CD4-positive, alpha-beta memory T cell (primary cell): ENCODE measurements at regions of chr6 and their contacts with region 1.

Region 1: DNA sequence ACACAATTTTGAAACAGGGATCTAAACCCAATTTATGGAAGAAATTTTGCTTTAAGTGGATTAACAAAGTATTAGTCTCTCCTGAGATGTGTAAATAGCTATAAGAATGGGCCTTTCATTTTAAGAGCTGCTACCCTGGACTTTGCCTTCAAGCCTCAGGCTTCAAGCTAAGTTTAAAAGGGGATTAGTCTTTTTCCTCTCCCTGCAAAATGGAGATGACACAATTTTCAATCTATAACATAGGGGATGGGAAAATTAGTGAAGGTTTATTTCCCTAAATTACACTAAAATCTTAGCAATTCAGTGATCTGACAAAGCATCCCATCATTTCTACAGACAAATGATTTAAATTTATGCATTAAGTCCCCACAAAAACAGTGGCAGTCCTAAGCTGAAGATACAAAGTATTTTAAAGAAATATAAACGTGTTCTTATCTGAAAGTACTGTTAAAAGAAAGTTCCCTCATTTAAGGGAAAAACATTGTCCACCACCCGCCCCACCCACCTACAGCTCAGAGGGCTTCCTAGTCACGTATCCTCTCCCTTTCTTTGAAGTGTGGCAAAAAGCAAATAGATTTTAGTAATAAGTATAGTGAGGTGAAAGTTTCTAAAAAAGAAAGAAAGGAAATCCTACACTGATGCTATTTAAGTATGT is 14.5 kb downstream of the ARHGAP18 start:
- DNase-seq: no peak
- H3K4me3 ChIP-seq: no peak overlapping the region
- H3K4me3 Mint-ChIP-seq: peak overlapping the region in 7 of 8 donors; percentile 2 to 75 (median 37)
- H3K27ac ChIP-seq: no peak overlapping the region
- H3K27ac Mint-ChIP-seq: peak overlapping the region in 6 of 7 donors; percentile 28 to 73 (median 48)
- H3K4me1 ChIP-seq: peaks cover 26% of the 10 kb centered on the region
- H3K4me1 Mint-ChIP-seq: peaks cover 22 to 33% (median 27%) of the 10 kb centered on the region in 4 donors
- H3K27me3 ChIP-seq: no peaks in the 10 kb centered on the region
- H3K27me3 Mint-ChIP-seq: no peaks in the 10 kb centered on the region

Region 2: DNA sequence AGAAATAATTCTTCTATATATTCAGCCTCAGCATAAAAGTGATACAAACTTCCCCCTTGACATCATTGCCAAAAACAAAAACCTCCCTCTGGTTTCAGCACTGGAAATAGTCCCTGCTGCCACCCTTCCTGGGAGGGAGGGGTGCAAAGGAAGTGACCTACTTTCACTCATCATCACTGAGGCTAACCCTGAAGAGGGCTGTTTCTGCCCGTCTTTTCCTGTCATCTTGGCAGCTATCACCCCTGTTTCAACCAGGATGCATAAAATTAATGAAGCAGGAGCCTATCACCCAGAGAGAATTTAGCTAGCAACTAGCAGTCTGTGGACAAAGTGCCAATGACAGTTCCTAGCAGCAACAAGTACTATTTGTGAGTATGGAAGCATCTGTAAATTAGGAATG is 414.8 kb before region 1 on chr6:
- CTCF ChIA-PET with region 1: no interaction called
- POLR2A ChIA-PET with region 1: no interaction called
- intact Hi-C with region 1: no loop called
- DNase-seq: peak; percentile 66 to 80 (median 76)
- H3K4me3 ChIP-seq: no peak overlapping the region
- H3K4me3 Mint-ChIP-seq: peak overlapping the region; percentile 67 to 84 (median 78)
- H3K27ac ChIP-seq: peak overlapping the region; percentile 61
- H3K27ac Mint-ChIP-seq: peak overlapping the region; percentile 57 to 95 (median 85)
- H3K4me1 ChIP-seq: peaks cover 47% of the 10 kb centered on the region
- H3K4me1 Mint-ChIP-seq: peaks cover 31 to 66% (median 48%) of the 10 kb centered on the region in 4 donors
- H3K27me3 ChIP-seq: no peaks in the 10 kb centered on the region
- H3K27me3 Mint-ChIP-seq: peaks cover 0 to 2% of the 10 kb centered on the region in 2 donors

Region 3: DNA sequence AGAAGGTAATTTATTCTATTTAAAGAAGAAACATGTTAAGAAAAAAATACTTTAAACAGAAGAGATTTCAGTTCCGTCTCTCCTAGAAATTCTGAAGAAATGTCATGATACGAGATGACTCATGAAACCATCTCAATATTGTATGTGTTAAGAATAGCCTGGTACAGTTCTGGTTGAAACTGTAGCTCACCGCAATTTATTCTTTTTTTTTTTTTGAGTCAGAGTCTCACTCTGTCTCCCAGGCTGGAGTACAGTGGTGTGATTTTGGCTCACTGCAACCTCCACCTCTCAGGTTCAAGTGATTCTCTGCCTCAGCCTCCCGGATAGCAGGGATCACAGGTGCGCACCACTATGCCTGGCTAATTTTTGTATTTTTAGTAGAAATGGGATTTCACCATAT is 88.8 kb before region 1 on chr6:
- CTCF ChIA-PET with region 1: no interaction called
- POLR2A ChIA-PET with region 1: no interaction called
- intact Hi-C with region 1: no loop called
- DNase-seq: no peak
- H3K4me3 ChIP-seq: no peak overlapping the region
- H3K4me3 Mint-ChIP-seq: no peak overlapping the region
- H3K27ac ChIP-seq: no peak overlapping the region
- H3K27ac Mint-ChIP-seq: no peak overlapping the region
- H3K4me1 ChIP-seq: no peaks in the 10 kb centered on the region
- H3K4me1 Mint-ChIP-seq: no peaks in the 10 kb centered on the region
- H3K27me3 ChIP-seq: no peaks in the 10 kb centered on the region
- H3K27me3 Mint-ChIP-seq: no peaks in the 10 kb centered on the region

Region 4: GRCh38 chr6:129663531-129663930 is 32.0 kb before region 1 on chr6:
- CTCF ChIA-PET with region 1: no interaction called
- POLR2A ChIA-PET with region 1: no interaction called
- intact Hi-C with region 1: no loop called
- DNase-seq: no peak
- H3K4me3 ChIP-seq: no peak overlapping the region
- H3K4me3 Mint-ChIP-seq: no peak overlapping the region
- H3K27ac ChIP-seq: no peak overlapping the region
- H3K27ac Mint-ChIP-seq: no peak overlapping the region
- H3K4me1 ChIP-seq: peaks cover 6% of the 10 kb centered on the region
- H3K4me1 Mint-ChIP-seq: peaks cover 12 to 19% (median 15%) of the 10 kb centered on the region in 4 donors
- H3K27me3 ChIP-seq: no peaks in the 10 kb centered on the region
- H3K27me3 Mint-ChIP-seq: no peaks in the 10 kb centered on the region

Region 5: DNA sequence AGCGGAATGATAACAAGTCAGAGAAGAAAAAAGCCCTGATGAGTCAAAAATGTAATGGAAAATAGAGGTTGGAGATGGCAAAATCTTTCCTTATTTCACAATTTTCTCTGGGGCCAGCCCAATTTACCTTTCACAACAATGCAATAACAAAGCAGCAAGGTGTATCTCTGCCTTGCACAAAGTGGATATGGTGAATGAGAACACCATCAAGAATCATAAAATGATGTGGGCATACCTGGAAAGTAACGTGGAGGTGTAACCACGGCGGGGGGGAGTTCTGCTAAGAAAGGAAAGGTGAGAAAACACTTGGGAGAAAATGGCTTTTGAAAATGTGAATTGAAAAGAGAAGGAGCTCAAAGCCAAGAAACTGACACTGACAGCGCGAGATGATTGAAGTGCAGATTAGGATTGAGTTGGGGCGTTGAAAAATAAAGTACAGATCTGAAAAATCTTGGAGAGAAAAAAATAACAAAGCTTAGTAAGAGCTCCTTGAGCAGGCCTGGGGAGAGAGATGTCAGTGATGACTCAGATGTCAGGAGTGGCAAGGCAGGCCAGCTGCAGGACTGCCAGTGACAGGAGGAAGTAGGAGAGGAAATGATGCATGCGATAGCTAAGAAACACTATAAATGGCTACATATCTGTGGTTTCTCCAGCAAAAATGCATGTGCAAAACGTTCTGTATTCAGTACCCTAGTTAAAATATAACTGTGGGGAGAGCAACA is 11.7 kb before region 1 on chr6:
- CTCF ChIA-PET with region 1: interaction called, 5 read pairs
- POLR2A ChIA-PET with region 1: interaction called, 8 read pairs
- intact Hi-C with region 1: loop called (anchors 1 kb)
- DNase-seq: peak; percentile 55 to 86 (median 64)
- H3K4me3 ChIP-seq: no peak overlapping the region
- H3K4me3 Mint-ChIP-seq: peak overlapping the region in 7 of 8 donors; percentile 30 to 75 (median 52)
- H3K27ac ChIP-seq: peak overlapping the region; percentile 43
- H3K27ac Mint-ChIP-seq: peak overlapping the region; percentile 70 to 91 (median 90)
- H3K4me1 ChIP-seq: peaks cover 65% of the 10 kb centered on the region
- H3K4me1 Mint-ChIP-seq: peaks cover 37 to 51% (median 44%) of the 10 kb centered on the region in 4 donors
- H3K27me3 ChIP-seq: no peaks in the 10 kb centered on the region
- H3K27me3 Mint-ChIP-seq: no peaks in the 10 kb centered on the region

Region 6: GRCh38 chr6:129709769-129710449 is 14.4 kb after region 1 on chr6 and contains the start of gene ARHGAP18:
- CTCF ChIA-PET with region 1: interaction called, 8 read pairs
- POLR2A ChIA-PET with region 1: interaction called, 13 read pairs
- intact Hi-C with region 1: no loop called
- DNase-seq: peak; percentile 58 to 76 (median 68)
- H3K4me3 ChIP-seq: peak within 1 kb of the TSS; percentile 81 to 97
- H3K4me3 Mint-ChIP-seq: peak within 1 kb of the TSS; percentile 95 to 99 (median 98)
- H3K27ac ChIP-seq: peak within 1 kb of the TSS; percentile 65
- H3K27ac Mint-ChIP-seq: peak within 1 kb of the TSS; percentile 57 to 96 (median 94)
- H3K4me1 ChIP-seq: peaks cover 38% of the 10 kb centered on the region
- H3K4me1 Mint-ChIP-seq: peaks cover 29 to 45% (median 38%) of the 10 kb centered on the region in 4 donors
- H3K27me3 ChIP-seq: no peaks in the 10 kb centered on the region
- H3K27me3 Mint-ChIP-seq: peaks cover 0 to 2% of the 10 kb centered on the region in 2 donors
- total RNA-seq, gene ARHGAP18: 4.3 to 4.6 TPM